Activated naive CD4-positive, alpha-beta T cell treated with anti-CD3 and anti-CD28 coated beads for 36 hours (primary cell): ENCODE measurements at regions of chr18 and their contacts with region 1.

Region 1: DNA sequence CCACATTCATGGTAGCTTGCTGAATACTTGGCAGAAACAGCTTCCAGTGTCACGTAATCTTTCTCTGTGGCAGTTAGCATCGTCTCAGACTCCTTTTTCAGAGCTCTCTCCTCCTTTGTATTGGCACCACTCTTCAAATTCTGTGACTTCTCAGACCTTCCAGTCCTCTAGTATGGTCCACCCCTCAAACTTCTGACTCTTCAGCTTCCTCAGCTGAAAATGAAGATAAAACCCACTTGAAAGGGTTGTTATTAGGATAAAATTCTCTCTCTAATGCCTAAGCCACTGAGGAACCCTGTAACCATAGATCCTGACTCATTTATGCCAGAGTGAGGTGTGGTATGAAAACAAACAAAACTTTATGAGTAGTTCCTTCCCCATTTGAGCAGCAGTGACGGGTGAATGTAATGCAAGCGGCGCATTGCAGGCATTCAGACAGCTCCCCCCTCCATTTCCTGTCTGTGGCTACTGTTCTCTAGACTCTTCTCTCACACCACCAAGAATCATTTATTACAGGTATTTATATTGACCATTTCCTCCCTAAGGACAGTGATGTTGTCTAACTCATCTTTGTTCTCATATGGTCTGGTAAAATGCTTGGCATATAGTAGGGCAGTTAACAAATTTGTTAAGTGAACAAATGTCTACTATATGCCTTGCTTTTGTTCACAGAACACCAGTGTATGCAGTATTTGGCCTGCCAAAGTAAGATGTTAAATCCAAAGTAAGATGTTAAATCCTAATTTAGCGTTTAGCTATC is 35.3 kb downstream of the GALNT1 start:
- DNase-seq: peak; percentile 86
- H3K4me3 Mint-ChIP-seq: no peak overlapping the region
- H3K27ac Mint-ChIP-seq: no peak overlapping the region
- H3K4me1 Mint-ChIP-seq: peaks cover 22% of the 10 kb centered on the region
- H3K27me3 Mint-ChIP-seq: no peaks in the 10 kb centered on the region

Region 2: GRCh38 chr18:34976899-34977837 is 639.7 kb before region 1 on chr18:
- CTCF ChIA-PET with region 1: no interaction called
- intact Hi-C with region 1: loop called (anchors 5 kb)
- DNase-seq: peak; percentile 79
- H3K4me3 Mint-ChIP-seq: peak overlapping the region; percentile 85
- H3K27ac Mint-ChIP-seq: no peak overlapping the region
- H3K4me1 Mint-ChIP-seq: peaks cover 23% of the 10 kb centered on the region
- H3K27me3 Mint-ChIP-seq: peaks cover 5% of the 10 kb centered on the region

Region 3: DNA sequence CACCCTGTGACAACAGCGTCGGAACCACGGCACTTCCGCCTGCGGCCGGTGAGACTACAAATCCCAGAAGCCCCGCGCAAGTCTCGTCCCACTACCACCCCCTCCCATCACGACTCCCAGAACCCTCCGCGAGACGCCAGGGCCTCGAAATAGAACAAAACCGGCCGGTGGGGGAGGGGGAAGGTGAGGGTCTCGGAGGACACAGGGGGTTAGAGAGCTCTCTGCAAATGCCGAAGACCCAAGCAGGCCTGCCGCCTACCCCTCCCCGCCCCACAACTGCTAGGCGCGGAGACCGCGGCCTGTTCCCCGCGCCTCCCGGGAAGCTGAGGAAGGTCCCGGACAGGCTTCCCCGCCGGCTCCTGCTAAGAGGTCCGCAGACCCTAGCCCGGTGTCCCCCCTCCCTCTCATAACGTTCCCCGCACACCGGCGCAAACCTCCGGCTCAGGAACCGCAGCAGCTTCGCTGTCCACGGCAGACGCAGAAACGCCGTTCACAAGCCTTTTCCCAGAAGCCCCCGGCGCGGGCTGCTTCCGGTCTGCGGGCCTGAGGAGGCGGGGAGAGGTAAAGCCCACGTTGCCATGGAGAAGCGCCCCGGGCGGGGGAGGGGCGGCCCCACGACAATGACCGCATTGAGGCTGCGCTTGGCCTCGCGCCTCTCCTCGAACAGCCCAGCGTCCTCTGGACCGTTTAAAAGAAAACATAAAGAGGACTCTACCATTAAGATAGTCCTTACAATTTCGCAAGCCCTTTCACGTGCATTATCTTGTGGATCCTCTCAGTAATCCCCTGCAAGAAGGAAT is 272.7 kb before region 1 on chr18 and contains the start of gene ZNF24:
- CTCF ChIA-PET with region 1: no interaction called
- intact Hi-C with region 1: loop called (anchors 2 kb)
- DNase-seq: peak; percentile 94
- H3K4me3 Mint-ChIP-seq: peak within 1 kb of the TSS; percentile 92
- H3K27ac Mint-ChIP-seq: peak within 1 kb of the TSS; percentile 92
- H3K4me1 Mint-ChIP-seq: peaks cover 43% of the 10 kb centered on the region
- H3K27me3 Mint-ChIP-seq: no peaks in the 10 kb centered on the region
- total RNA-seq, gene ZNF24: 46.8 to 47.8 TPM

Region 4: GRCh38 chr18:35580701-35581539 is 35.9 kb before region 1 on chr18:
- CTCF ChIA-PET with region 1: interaction called, 3 read pairs
- intact Hi-C with region 1: loop called (anchors 1 kb)
- DNase-seq: peak; percentile 51
- H3K4me3 Mint-ChIP-seq: peak overlapping the region; percentile 74
- H3K27ac Mint-ChIP-seq: peak overlapping the region; percentile 71
- H3K4me1 Mint-ChIP-seq: peaks cover 45% of the 10 kb centered on the region
- H3K27me3 Mint-ChIP-seq: peaks cover 15% of the 10 kb centered on the region

Region 5: GRCh38 chr18:35827275-35827902 is 210.5 kb after region 1 on chr18:
- CTCF ChIA-PET with region 1: no interaction called
- intact Hi-C with region 1: loop called (anchors 2 kb)
- DNase-seq: peak; percentile 62
- H3K4me3 Mint-ChIP-seq: no peak overlapping the region
- H3K27ac Mint-ChIP-seq: peak overlapping the region; percentile 75
- H3K4me1 Mint-ChIP-seq: peaks cover 15% of the 10 kb centered on the region
- H3K27me3 Mint-ChIP-seq: peaks cover 22% of the 10 kb centered on the region

Region 6: DNA sequence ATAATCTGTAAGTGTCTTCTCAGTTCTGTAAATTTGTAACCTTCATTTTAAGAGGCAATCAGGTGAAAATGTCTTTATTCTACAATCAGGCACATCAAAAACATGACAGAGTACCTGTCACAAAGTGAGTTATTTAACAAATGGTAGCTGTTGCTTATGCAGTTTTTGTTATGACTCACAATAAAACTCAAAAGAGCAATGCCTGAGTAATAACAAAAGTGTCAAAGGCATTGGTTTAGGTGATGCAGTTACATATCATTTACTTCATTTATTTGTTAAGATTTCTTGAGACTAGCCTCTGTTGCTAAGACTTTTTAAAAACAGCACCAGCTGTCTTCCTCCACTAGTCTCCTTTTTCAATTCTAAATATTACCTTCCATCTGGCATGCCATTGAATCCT is 1389.9 kb after region 1 on chr18:
- CTCF ChIA-PET with region 1: no interaction called
- intact Hi-C with region 1: loop called (anchors 5 kb)
- DNase-seq: no peak
- H3K4me3 Mint-ChIP-seq: no peak overlapping the region
- H3K27ac Mint-ChIP-seq: no peak overlapping the region
- H3K4me1 Mint-ChIP-seq: peaks cover 2% of the 10 kb centered on the region
- H3K27me3 Mint-ChIP-seq: no peaks in the 10 kb centered on the region